ENCODE measurements at regions of chr1 and their contacts with region 1.

Region 1: GRCh38 chr1:151832318-151832975 is 845 bp upstream of the RORC start:
- DNase-seq: no peak
- ATAC-seq: no peak
- H3K4me3 ChIP-seq: no peak overlapping the region
- H3K27ac ChIP-seq: no peak overlapping the region
- H3K4me1 ChIP-seq: peaks cover 5 to 27% of the 10 kb centered on the region in 2 experiments
- H3K27me3 ChIP-seq: no peaks in the 10 kb centered on the region; a peak in 2 of 5 replicates
- CTCF ChIP-seq: no peak
- EP300 ChIP-seq: no peak
- POLR2A ChIP-seq: no peak
- RAD21 ChIP-seq: no peak

Region 2: DNA sequence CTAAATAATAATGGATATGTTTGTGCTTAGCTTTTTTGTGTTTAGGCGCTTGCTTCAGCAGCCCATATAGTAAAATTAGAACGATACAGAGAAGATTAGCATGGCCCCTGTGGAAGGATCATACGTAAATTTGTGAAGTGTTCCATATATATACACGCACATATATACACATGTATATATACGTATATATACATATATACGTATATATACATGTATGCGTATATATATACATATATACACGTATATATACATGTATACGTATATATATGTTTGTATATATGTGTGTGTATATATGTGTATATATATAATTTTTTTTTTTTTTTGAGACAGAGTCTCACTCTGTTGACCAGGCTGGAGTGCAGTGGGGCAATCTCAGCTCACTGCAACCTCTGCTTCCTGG is 203.2 kb before region 1 on chr1:
- CTCF ChIA-PET with region 1: no interaction called
- POLR2A ChIA-PET with region 1: no interaction called
- in situ Hi-C with region 1: no loop called
- intact Hi-C with region 1: no loop called
- DNase-seq: no peak
- ATAC-seq: no peak
- H3K4me3 ChIP-seq: no peak overlapping the region
- H3K27ac ChIP-seq: no peak overlapping the region
- H3K4me1 ChIP-seq: no peaks in the 10 kb centered on the region; a peak in 1 of 5 replicates
- H3K27me3 ChIP-seq: no peaks in the 10 kb centered on the region
- CTCF ChIP-seq: no peak
- EP300 ChIP-seq: no peak
- POLR2A ChIP-seq: no peak
- RAD21 ChIP-seq: no peak

Region 3: DNA sequence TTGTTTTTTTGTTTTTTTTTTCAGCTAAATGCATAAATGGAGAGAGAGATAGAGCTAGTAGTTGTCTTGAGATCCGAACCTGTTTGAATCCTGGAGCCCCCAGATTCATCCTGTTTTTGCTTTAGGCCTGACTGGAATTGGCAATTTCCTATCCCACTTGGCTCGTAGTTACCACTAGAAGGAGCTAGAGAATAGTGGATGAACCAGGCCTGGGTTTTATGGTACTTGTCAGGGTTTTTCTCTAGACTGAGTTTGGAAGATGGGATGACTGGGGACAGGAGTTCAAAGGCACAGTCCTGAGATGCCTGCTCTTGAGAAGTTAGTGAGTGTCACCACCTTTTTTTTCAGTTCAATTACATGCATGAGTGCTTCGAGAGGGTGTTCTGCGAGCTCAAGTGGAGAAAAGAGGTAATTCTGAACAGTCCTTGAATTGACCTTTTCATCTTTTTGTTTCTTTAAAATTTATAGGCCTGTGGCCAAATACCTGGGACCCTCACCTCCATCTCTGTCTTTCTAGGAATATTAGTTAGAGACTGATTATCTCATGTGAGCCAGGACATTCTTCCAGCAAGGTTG is 139.3 kb before region 1 on chr1:
- CTCF ChIA-PET with region 1: interaction called, 26 read pairs
- POLR2A ChIA-PET with region 1: interaction called, 3 read pairs
- in situ Hi-C with region 1: loop called (anchors 5 kb)
- intact Hi-C with region 1: loop called (anchors 1 kb)
- DNase-seq: peak in 2 of 4 experiments; percentile 32 to 40
- ATAC-seq: peak; percentile 74
- H3K4me3 ChIP-seq: no peak overlapping the region
- H3K27ac ChIP-seq: no peak overlapping the region
- H3K4me1 ChIP-seq: no peaks in the 10 kb centered on the region
- H3K27me3 ChIP-seq: no peaks in the 10 kb centered on the region
- CTCF ChIP-seq: peak; percentile 74 to 80 (median 78)
- EP300 ChIP-seq: no peak
- POLR2A ChIP-seq: no peak
- RAD21 ChIP-seq: peak; percentile 69 to 85

Measured in K562 (cell line).